PC-9 (cell line): ENCODE measurements at regions of chr1 and their contacts with region 1.

Region 1: DNA sequence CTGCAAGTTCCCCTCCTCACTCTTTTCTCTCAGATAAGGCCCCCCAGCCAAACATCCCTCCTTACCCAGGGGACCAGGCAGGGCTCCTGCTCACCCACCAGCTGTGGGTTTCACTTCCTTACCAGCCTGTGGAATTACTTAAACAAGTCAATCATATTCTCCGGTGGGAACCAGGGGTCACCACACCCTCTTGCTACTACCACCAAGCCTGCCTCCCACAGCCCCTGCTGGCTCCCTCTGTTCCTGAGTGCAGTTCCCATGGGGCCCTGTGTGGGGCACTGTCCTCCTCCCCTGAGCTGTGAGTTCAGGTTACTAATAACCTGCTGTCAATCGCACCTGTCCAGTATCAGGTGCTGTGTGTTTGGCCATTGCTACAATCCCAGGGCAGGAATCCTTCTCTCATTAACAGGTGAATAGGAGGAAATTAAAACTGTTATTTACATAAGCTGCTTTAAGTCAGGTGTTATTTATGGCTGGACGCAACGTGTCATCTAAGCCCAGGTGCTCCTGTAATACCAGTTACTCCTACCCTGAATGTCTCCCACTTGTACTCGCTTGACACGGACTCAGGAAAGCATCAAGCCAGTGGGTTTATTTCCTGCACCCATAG is 53.1 kb upstream of the LBR start:
- DNase-seq: peak; percentile 59 to 81
- H3K4me3 ChIP-seq: no peak overlapping the region
- H3K27ac ChIP-seq: no peak overlapping the region
- H3K4me1 ChIP-seq: no peaks in the 10 kb centered on the region
- H3K27me3 ChIP-seq: no peaks in the 10 kb centered on the region
- CTCF ChIP-seq: peak; percentile 94

Region 2: GRCh38 chr1:225532240-225532944 is 51.5 kb after region 1 on chr1:
- CTCF ChIA-PET with region 1: interaction called, 18 read pairs
- POLR2A ChIA-PET with region 1: no interaction called
- intact Hi-C with region 1: no loop called
- DNase-seq: peak in 1 of 2 experiments; percentile 75
- H3K4me3 ChIP-seq: no peak overlapping the region
- H3K27ac ChIP-seq: peak overlapping the region; percentile 37; the same call in 1 of the 2 replicates
- H3K4me1 ChIP-seq: peaks cover 29% of the 10 kb centered on the region
- H3K27me3 ChIP-seq: no peaks in the 10 kb centered on the region
- CTCF ChIP-seq: no peak

Region 3: DNA sequence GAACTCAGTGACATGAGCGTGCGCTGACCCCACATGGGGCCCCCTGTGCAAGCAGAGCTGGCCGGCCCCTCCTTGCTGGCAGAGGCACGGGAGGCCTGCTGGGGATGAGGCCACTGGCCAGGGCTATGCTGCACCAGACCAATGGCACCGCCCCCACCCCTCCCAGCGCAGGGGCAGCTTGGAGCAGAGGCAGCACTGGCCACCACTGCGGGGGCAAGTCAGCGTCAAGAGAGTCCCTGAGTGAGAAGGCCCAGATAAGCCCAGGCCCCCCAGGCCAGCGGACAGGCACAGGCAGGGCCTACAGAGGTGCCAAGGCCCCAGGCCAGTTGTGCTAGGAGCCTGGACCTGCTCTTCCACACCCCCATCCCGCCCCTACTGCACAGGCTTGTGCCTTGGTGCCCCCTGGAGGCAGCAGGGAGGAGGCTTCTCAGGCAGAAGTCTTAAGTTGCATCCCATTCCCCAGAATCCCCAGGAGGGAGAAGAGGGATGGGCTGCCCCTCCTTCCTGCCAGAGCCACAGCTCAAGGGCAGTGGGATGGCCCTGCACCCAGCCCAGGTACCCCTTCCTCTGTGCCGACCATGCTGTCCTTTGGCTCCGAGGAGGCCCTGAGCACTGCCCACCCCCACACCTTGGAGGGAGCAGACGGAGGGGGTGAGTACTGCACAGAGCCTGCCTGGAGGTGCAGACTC is 364.8 kb after region 1 on chr1:
- CTCF ChIA-PET with region 1: no interaction called
- POLR2A ChIA-PET with region 1: no interaction called
- intact Hi-C with region 1: loop called (anchors 1 kb)
- DNase-seq: peak; percentile 68 to 80
- H3K4me3 ChIP-seq: no peak overlapping the region
- H3K27ac ChIP-seq: no peak overlapping the region
- H3K4me1 ChIP-seq: no peaks in the 10 kb centered on the region
- H3K27me3 ChIP-seq: no peaks in the 10 kb centered on the region
- CTCF ChIP-seq: peak; percentile 81